Calu3 (cell line): ENCODE measurements at regions of chr5 and their contacts with region 1.

Region 1: GRCh38 chr5:146203011-146203871 is at the start of gene RBM27:
- DNase-seq: peak; percentile 99
- H3K4me3 Mint-ChIP-seq: no peak within 1 kb of the TSS
- H3K27ac Mint-ChIP-seq: no peak within 1 kb of the TSS
- H3K4me1 Mint-ChIP-seq: no peaks in the 10 kb centered on the region
- H3K27me3 Mint-ChIP-seq: no peaks in the 10 kb centered on the region
- CTCF ChIP-seq: no peak
- total RNA-seq, gene RBM27: 24.1 and 26.3 TPM in 2 replicates

Region 2: GRCh38 chr5:146188358-146188757 is 14.9 kb before region 1 on chr5:
- CTCF ChIA-PET with region 1: no interaction called
- intact Hi-C with region 1: loop called (anchors 2 kb)
- DNase-seq: no peak
- H3K4me3 Mint-ChIP-seq: no peak overlapping the region
- H3K27ac Mint-ChIP-seq: no peak overlapping the region
- H3K4me1 Mint-ChIP-seq: peaks cover 24% of the 10 kb centered on the region
- H3K27me3 Mint-ChIP-seq: peaks cover 7% of the 10 kb centered on the region
- CTCF ChIP-seq: no peak

Region 3: DNA sequence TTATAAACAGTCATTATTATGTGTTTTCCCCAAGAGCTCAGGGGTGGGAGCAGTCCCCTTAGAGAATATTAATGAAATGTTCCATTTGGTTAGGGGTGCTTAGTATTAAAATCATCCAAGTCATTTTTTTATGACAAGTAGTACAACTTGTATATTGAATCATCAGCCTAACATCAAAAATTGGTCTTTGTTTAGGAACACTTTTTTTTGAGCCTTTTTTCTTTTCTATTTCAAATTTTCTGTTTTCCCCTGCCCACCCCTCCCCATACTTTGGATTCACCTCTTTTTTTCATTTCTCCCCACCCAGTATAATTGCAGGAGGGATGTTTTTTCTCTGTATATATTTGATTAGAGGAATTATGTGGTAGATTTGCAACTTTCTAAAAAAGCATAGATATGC is 26.0 kb after region 1 on chr5:
- CTCF ChIA-PET with region 1: no interaction called
- intact Hi-C with region 1: no loop called
- DNase-seq: no peak
- H3K4me3 Mint-ChIP-seq: no peak overlapping the region
- H3K27ac Mint-ChIP-seq: no peak overlapping the region
- H3K4me1 Mint-ChIP-seq: no peaks in the 10 kb centered on the region
- H3K27me3 Mint-ChIP-seq: no peaks in the 10 kb centered on the region
- CTCF ChIP-seq: no peak